ENCODE measurements at regions of chr19 and their contacts with region 1.

Region 1: DNA sequence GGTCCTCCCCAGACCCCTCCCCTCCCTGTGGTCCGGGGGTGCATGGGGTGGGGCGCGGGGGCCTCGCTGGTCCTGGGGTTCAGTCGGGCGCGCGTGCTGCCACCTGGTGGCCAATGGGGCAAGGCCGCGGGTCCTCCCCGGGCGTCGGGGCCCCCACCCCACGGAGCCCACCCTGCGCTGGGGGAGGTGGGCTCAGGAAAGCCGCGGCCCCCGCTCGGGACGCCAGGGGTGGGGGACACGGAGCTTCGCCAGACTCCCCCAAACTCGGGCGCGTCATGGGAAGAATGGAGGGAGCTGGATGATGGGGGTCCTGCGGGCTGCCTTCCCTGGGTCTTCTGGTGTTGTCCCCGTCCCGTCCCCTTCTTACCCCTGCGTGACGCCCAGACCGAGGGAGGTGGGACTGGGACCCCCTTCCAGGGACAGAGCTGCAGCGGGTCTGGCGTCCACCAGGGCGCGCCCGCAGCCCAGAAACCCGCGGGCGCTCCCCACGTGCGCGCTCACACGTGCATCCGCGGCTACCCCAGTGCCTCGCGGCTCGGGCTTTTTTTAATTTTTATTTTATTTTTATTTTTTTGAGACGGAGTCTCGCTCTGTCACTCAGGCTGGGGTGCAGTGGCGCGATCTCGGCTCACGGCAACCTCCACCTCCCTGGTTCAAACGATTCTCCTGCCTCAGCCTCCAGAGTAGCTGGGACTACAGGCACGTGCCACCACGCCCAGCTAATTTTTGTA is 19.8 kb upstream of the TCF3 start:
- DNase-seq: peak; percentile 78
- ATAC-seq: peak; percentile 64
- H3K4me3 Mint-ChIP-seq: no peak overlapping the region
- H3K27ac Mint-ChIP-seq: no peak overlapping the region
- H3K4me1 Mint-ChIP-seq: peaks cover 13% of the 10 kb centered on the region
- H3K27me3 Mint-ChIP-seq: peaks cover 46% of the 10 kb centered on the region

Region 2: DNA sequence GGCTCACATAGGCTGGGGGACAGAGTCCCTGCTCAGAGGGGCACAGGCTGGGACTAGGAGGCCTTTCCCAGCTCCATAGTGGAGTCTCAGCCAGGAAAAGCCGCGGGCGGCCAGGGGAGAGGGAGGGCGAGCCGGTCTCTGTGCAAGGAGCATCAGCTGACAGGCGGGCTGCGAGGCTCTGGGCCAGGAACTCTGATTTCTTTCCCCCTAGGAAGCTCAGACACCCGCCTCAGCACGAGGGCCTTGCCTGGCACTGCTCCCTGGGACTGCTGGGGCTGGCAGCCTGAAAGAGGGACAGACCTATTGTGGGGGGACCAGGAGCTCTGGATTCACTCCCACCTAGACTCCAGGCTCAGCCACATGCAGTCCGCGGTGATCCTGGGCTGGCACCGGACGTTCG is 150.6 kb before region 1 on chr19:
- CTCF ChIA-PET with region 1: no interaction called
- POLR2A ChIA-PET with region 1: no interaction called
- intact Hi-C with region 1: no loop called
- DNase-seq: no peak
- ATAC-seq: no peak
- H3K4me3 Mint-ChIP-seq: no peak overlapping the region
- H3K27ac Mint-ChIP-seq: no peak overlapping the region
- H3K4me1 Mint-ChIP-seq: peaks cover 5% of the 10 kb centered on the region
- H3K27me3 Mint-ChIP-seq: peaks cover 27% of the 10 kb centered on the region

Region 3: DNA sequence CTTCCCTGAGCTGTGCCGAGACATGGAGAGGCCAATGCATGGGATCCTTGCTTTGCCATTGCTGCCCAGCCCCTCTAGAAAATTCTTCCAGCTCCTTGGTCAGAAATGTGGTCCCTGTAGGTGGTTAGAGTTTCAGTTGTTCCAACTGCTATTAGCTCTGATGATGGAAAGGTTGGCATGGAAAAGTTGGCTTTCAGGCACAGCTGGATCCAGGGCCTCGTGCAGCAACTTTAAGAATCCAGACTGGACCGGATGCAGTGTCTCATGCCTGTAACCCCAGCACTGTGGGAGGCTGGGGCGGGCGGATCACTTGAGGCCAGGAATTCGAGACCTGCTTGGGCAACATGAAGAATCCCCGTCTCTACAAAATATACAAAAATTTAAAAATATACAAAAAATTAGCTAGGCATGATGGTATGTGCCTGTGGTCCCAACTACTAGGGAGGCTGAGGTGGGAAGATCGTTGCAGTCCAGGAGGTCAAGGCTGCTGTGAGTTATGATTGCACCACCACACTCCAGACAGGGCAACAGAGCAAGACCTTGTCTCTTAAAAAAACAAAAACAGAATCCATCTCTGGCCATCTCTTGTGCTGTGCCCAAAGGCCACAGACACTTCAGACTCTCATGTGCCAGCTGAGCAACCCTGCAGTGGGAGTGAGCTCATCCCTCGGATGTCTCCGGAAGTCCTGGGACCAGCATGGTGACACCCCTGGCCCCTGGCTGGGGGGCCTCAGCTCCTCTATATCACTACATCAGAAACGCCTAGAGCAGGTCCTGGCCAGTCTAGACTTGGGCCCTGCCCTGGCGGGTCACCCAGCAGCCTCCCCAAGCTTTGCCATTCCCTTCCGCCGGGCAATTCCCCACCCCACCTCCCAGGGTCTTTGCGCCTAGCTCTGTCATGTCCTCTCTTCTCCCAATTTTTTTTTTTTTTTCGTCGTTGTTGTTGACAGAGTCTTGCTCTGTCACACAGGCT is 120.8 kb before region 1 on chr19:
- CTCF ChIA-PET with region 1: interaction called, 6 read pairs
- POLR2A ChIA-PET with region 1: no interaction called
- intact Hi-C with region 1: loop called (anchors 1 to 5 kb)
- DNase-seq: no peak
- ATAC-seq: no peak
- H3K4me3 Mint-ChIP-seq: no peak overlapping the region
- H3K27ac Mint-ChIP-seq: no peak overlapping the region
- H3K4me1 Mint-ChIP-seq: peaks cover under 1% of the 10 kb centered on the region
- H3K27me3 Mint-ChIP-seq: peaks cover 2% of the 10 kb centered on the region

Region 4: DNA sequence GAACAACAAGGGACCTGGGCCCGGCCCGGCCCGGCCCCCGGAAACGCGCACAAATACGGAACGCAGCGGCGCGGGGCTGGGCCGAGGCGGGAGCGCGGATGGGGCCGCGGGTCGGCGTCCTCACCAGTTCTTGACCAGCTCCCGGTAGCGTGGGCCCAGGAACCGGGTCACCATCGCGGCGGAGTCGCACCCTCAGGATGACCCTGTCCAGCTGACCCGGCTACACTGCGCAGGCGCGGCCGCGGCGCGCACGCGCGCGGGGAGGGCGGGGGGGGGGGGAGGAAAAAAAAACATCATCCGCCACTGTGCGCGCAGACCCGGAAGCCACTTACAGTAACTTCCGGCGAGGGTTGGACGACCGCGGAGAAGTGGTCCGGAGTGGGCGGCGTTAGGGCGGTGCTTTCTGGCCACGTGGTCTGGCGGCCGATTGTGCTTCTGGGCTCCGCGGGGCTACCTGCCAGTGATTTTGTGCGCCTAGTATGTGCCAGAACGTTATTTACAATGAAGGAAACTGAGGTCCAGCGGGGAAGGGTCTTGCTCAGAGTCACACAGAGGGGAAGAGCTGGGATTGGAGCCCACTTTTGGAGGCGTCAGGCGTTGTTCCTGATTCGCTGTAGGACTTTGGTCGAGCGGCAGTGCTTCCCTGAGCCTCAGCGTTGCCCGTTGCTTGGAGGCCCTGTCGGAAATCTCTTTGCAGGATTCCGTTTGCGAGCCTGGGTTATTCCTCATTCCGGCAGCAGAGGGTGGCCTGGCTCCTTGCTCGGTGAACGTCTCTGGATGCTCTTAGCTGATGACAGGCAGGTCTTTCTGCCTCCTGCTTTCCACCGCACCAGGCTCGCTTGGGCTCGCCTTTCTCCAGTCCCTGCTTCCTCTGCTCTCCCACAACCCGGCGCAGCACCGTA is 66.7 kb before region 1 on chr19 and contains the start of gene UQCR11:
- CTCF ChIA-PET with region 1: interaction called, 3 read pairs
- POLR2A ChIA-PET with region 1: no interaction called
- intact Hi-C with region 1: loop called (anchors 1 to 5 kb)
- DNase-seq: peak; percentile 96
- ATAC-seq: peak; percentile 89
- H3K4me3 Mint-ChIP-seq: peak within 1 kb of the TSS; percentile 97
- H3K27ac Mint-ChIP-seq: peak within 1 kb of the TSS; percentile 99
- H3K4me1 Mint-ChIP-seq: peaks cover 52% of the 10 kb centered on the region
- H3K27me3 Mint-ChIP-seq: no peaks in the 10 kb centered on the region
- total RNA-seq, gene UQCR11: 152 to 226 TPM

Region 5: DNA sequence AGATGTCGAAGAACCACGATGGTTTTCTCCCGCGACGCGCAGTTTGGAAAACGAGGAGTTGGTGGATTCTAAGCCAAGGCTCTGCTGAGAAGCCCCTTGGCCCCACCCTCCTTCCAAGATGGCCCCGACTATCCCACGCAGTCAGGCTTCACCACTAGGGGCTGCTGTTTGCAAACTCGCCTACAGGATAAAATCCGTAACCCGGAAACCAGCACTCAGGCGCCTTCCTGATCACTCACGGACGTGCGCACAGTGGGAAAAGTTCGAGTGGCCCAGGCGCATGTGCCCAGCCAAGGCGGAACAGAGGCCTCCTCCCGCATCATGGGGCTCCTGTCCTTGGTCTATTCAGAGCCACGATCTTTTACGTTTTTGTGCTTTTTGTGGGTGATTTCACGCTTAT is 47.7 kb before region 1 on chr19:
- CTCF ChIA-PET with region 1: interaction called, 3 read pairs
- POLR2A ChIA-PET with region 1: no interaction called
- intact Hi-C with region 1: loop called in 1 of 2 experiments (anchors 2 kb)
- DNase-seq: peak; percentile 78
- ATAC-seq: peak; percentile 74
- H3K4me3 Mint-ChIP-seq: no peak overlapping the region
- H3K27ac Mint-ChIP-seq: peak overlapping the region; percentile 29
- H3K4me1 Mint-ChIP-seq: no peaks in the 10 kb centered on the region
- H3K27me3 Mint-ChIP-seq: no peaks in the 10 kb centered on the region

Region 6: GRCh38 chr19:1661995-1662394 is 10.2 kb before region 1 on chr19:
- CTCF ChIA-PET with region 1: interaction called, 12 read pairs
- POLR2A ChIA-PET with region 1: no interaction called
- intact Hi-C with region 1: no loop called
- DNase-seq: no peak
- ATAC-seq: no peak
- H3K4me3 Mint-ChIP-seq: no peak overlapping the region
- H3K27ac Mint-ChIP-seq: no peak overlapping the region
- H3K4me1 Mint-ChIP-seq: peaks cover 7% of the 10 kb centered on the region
- H3K27me3 Mint-ChIP-seq: no peaks in the 10 kb centered on the region

Region 7: GRCh38 chr19:1767464-1767933 is 95.3 kb after region 1 on chr19:
- CTCF ChIA-PET with region 1: interaction called, 20 read pairs
- POLR2A ChIA-PET with region 1: interaction called, 3 read pairs
- intact Hi-C with region 1: loop called (anchors 1 to 5 kb)
- DNase-seq: peak; percentile 74
- ATAC-seq: peak; percentile 34
- H3K4me3 Mint-ChIP-seq: no peak overlapping the region
- H3K27ac Mint-ChIP-seq: no peak overlapping the region
- H3K4me1 Mint-ChIP-seq: no peaks in the 10 kb centered on the region
- H3K27me3 Mint-ChIP-seq: peaks cover 63% of the 10 kb centered on the region

Region 8: DNA sequence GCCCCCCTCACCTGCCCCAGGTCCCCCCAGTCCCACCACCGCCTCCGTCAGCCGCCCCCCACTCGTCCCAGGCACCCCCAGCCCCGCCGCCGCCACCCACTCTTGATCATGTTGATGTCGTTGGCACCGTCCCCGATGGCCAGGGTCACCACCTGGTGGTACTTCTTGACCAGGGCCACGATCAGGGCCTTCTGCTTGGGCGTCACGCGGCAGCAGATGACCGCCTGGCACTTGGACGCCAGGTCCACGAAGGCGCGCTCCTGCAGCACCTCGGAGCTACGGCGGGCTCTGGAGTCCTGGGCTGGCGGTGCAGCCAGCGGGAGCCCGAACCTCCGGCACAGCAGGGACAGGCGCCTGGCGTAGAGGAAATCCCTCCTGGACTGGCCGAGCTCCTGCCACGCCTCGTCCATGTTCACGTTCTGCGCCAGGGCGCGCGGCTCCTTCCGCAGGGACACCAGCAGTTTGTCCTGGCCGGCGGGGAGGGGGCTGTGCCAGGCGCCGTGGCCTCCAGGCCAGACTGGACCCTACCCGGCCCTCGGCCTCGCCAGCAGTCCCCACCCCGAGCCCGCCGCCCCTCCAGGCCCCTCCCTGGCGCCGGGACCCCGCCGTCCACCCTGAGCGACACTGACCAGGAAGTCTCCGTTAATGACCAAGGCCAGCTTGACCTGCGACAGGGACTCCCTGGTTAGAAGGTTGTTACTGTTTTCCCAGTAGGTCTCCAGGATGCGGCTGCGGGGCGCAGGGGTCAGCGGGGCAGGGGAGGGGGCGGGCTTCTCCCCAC is 117.2 kb after region 1 on chr19:
- CTCF ChIA-PET with region 1: interaction called, 3 read pairs
- POLR2A ChIA-PET with region 1: no interaction called
- intact Hi-C with region 1: loop called in 1 of 2 experiments (anchors 10 kb)
- DNase-seq: no peak
- ATAC-seq: no peak
- H3K4me3 Mint-ChIP-seq: no peak overlapping the region
- H3K27ac Mint-ChIP-seq: no peak overlapping the region
- H3K4me1 Mint-ChIP-seq: peaks cover 3% of the 10 kb centered on the region
- H3K27me3 Mint-ChIP-seq: peaks cover 12% of the 10 kb centered on the region

Region 9: GRCh38 chr19:1992759-1993260 is 320.6 kb after region 1 on chr19:
- CTCF ChIA-PET with region 1: no interaction called
- POLR2A ChIA-PET with region 1: no interaction called
- intact Hi-C with region 1: no loop called
- DNase-seq: peak; percentile 66
- ATAC-seq: peak; percentile 52
- H3K4me3 Mint-ChIP-seq: no peak overlapping the region
- H3K27ac Mint-ChIP-seq: no peak overlapping the region
- H3K4me1 Mint-ChIP-seq: no peaks in the 10 kb centered on the region
- H3K27me3 Mint-ChIP-seq: no peaks in the 10 kb centered on the region

Region 10: GRCh38 chr19:2003874-2004273 is 331.7 kb after region 1 on chr19:
- CTCF ChIA-PET with region 1: no interaction called
- POLR2A ChIA-PET with region 1: no interaction called
- intact Hi-C with region 1: no loop called
- DNase-seq: no peak
- ATAC-seq: no peak
- H3K4me3 Mint-ChIP-seq: no peak overlapping the region
- H3K27ac Mint-ChIP-seq: no peak overlapping the region
- H3K4me1 Mint-ChIP-seq: peaks cover 2% of the 10 kb centered on the region
- H3K27me3 Mint-ChIP-seq: no peaks in the 10 kb centered on the region

Region 11: GRCh38 chr19:2032296-2032941 is 360.2 kb after region 1 on chr19:
- CTCF ChIA-PET with region 1: no interaction called
- POLR2A ChIA-PET with region 1: no interaction called
- intact Hi-C with region 1: no loop called
- DNase-seq: peak; percentile 74
- ATAC-seq: peak; percentile 57
- H3K4me3 Mint-ChIP-seq: peak overlapping the region; percentile 70
- H3K27ac Mint-ChIP-seq: peak overlapping the region; percentile 85
- H3K4me1 Mint-ChIP-seq: peaks cover 28% of the 10 kb centered on the region
- H3K27me3 Mint-ChIP-seq: no peaks in the 10 kb centered on the region